PC-9 (cell line): ENCODE measurements at regions of chr12 and their contacts with region 1.

Region 1: GRCh38 chr12:103858953-103859601 is 18.0 kb upstream of the NT5DC3 start:
- DNase-seq: peak; percentile 73 to 96
- H3K4me3 ChIP-seq: peak overlapping the region; percentile 22; the same call in 1 of the 2 replicates
- H3K27ac ChIP-seq: peak overlapping the region; percentile 86
- H3K4me1 ChIP-seq: peaks cover 34% of the 10 kb centered on the region
- H3K27me3 ChIP-seq: no peaks in the 10 kb centered on the region
- CTCF ChIP-seq: no peak

Region 2: DNA sequence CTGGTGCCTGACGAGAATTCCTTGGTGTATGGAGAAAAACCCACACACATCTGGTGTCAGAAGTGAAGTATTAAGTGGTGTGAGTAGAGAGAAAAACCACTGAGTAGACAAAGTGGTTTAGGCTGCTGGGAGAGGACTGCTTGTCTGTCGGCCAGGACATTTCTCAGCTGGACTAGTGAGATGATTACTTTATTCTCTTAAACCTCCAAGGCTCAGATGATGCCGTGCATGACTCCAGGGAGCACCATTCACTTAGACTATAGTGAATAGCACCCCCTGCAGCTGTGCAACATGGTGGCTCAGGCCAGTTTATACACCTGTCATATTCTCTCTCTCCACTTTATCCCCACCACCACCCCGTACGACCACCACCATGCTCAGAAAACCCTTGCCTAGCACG is 307.4 kb after region 1 on chr12:
- CTCF ChIA-PET with region 1: no interaction called
- POLR2A ChIA-PET with region 1: interaction called, 17 read pairs
- intact Hi-C with region 1: no loop called
- DNase-seq: no peak
- H3K4me3 ChIP-seq: no peak overlapping the region
- H3K27ac ChIP-seq: no peak overlapping the region
- H3K4me1 ChIP-seq: no peaks in the 10 kb centered on the region
- H3K27me3 ChIP-seq: no peaks in the 10 kb centered on the region
- CTCF ChIP-seq: no peak

Region 3: DNA sequence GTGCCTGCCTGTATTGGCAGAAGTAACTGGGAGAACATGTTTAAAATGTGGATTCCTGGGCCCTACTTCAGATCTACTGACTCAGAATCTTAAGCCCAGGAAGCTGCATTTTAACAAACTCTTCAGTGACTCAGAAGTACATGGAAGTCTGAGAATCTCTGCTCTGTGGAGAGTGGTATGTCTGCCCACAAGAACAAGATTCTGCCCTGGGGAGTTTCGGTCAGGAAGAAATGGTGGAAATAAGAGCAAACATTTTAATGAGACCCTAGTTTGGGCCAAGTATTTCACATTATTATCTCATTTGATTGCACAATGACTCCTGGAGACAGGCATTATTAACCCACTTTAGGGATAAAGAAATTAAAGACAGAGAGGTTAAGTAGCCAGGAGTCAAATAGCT is 1217.0 kb after region 1 on chr12:
- CTCF ChIA-PET with region 1: interaction called, 10 read pairs
- POLR2A ChIA-PET with region 1: no interaction called
- intact Hi-C with region 1: no loop called
- DNase-seq: no peak
- H3K4me3 ChIP-seq: no peak overlapping the region
- H3K27ac ChIP-seq: no peak overlapping the region
- H3K4me1 ChIP-seq: no peaks in the 10 kb centered on the region
- H3K27me3 ChIP-seq: no peaks in the 10 kb centered on the region
- CTCF ChIP-seq: no peak